ENCODE measurements at regions of chr16 and their contacts with region 1.

Region 1: GRCh38 chr16:20849587-20850390 is 43.5 kb downstream of the REXO5 start:
- DNase-seq: peak; percentile 35
- CTCF ChIP-seq: peak; percentile 99

Region 2: DNA sequence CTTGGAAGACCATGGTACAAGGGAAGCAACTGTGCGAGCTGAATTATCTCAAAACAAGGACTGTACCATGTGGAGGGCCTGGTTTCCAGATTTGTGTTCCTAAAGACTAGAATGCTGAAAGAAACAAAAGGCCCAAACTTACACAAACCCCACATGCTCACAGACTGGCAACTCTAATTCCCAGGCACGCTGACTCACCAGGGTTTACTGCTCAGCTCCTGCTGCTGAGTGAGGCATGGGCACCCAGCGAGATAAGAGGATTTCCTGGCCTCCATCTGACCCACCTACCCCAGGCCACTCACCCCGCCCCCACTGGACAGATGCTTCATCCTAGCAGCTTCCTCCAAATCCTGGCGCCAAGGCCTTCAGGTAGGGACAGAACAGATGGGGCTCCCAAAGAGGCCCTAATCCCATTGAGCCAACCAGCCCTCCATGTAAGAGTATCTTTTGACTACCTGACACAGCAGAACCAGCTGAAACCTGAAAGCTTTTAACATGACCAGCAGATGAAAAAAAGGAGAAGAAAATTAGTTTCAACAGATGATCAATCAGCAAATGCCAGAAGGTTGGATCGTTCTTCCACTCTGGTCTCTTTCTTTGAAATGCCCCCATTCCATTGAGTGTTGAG is 16.5 kb after region 1 on chr16:
- CTCF ChIA-PET with region 1: interaction called, 34 read pairs
- POLR2A ChIA-PET with region 1: no interaction called
- DNase-seq: no peak
- CTCF ChIP-seq: no peak

Region 3: DNA sequence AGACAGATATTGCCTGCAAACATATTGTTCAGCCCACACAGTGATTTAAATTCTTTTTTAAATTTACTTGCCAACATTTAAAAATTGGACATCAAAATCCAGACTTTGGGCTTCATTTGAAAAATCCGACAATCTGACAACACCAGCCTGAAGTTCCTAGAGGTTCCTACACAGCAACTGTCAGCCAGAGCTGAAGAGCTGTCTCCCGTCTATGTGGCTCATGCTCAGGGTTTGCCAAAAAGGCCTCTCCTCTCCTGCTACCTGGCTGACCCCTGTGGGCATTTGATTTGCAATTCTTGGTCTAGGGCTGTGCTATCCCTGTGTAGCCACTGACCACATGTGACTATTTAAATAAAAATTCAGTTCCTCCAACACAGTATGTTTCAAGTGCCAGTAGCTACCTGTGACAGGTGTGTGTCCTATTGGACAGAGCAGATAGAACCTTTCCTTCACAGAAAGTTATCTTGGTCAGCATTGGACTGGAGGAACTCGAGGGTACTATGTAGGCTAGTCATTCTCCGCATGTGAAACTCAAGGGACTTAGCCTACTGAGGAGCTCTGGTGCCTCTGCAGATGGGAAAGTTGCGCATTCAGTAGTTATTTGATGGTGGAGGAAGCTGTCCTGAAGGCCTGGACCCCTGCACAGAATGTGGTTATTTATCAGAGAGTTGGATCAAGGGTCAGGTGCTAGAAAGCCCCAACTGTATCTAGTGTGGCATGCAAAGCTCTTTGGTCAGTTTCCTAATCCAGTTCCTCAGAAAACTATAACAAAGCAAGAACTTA is 53.5 kb after region 1 on chr16:
- CTCF ChIA-PET with region 1: interaction called, 14 read pairs
- POLR2A ChIA-PET with region 1: no interaction called
- DNase-seq: no peak
- CTCF ChIP-seq: no peak

Region 4: DNA sequence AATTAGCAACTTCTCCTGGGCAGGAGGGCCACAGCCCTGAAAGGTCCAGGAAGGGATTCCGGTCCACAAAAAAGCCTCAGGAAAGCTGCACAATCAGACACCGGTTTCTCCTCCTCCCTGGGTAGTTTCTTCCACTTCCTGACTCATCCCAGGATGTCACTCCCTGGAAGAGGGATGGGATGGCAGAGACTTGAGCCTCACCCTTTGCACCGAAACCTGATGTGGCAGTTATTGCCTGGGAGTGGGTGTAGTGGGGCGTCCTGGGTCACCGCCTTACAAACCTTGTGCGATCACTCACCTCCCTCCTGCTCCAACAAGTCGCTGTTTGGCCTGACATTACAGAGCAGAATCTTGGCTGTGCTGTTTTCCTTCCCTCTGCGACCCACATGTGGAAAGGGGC is 121.6 kb after region 1 on chr16:
- CTCF ChIA-PET with region 1: no interaction called
- POLR2A ChIA-PET with region 1: no interaction called
- DNase-seq: no peak
- CTCF ChIP-seq: no peak

Region 5: DNA sequence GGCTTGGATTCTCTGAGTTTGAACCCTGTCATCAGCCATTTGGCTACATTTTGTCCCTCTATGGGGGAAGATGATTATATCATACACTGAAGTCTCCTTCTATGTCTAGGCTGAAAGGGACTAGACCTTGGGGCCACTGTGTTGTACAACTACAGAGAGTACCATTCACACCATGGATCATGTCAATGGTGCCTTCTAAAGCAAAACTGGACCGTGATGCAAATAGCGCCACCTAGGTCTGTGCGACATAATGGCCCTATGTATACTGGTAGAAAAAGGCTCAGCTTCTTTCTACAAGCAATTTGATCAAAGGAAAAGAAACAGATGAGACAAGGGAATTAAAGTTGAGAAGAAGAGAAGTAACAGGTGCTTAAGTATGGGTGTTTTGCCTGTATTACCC is 151.5 kb after region 1 on chr16:
- CTCF ChIA-PET with region 1: interaction called, 18 read pairs
- POLR2A ChIA-PET with region 1: no interaction called
- DNase-seq: peak; percentile 24
- CTCF ChIP-seq: peak; percentile 20

Region 6: DNA sequence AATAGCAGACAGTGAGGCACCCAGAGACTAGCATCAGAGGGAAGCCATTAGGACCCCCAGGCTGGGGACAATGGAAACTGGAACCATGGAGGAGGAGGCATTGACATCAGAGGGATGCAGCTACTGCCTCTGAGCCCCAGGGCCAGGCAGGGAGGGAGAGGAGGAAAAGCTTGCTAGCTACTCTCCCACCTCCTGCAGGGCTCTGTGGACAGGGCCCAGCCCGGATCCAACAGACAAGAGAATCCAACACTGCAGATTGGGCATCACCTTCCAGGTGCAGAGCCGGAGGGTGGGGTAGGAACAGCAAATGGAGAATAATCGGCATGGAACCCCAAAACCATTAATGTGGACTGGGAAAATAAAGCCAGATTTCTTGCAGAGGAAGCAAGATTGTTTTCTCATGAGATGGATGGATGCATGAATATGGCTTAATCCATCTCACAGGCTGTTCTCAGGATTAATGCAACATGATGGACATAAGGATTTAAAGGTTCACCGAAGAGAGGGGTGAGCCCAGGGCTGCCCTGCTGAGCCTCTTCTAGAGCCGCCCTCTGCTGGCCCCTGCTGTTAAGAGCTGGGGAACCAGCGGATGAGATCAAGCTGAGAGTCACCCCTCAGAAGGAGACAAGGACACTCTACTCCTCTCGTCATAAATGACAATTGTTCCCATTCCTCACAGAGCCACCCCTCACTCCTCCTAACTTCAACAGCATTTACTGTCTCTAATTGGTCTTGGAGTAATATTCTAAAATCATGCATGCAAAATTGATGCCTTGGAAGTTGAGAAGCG is 252.0 kb after region 1 on chr16:
- CTCF ChIA-PET with region 1: interaction called, 11 read pairs
- POLR2A ChIA-PET with region 1: no interaction called
- DNase-seq: no peak
- CTCF ChIP-seq: peak; percentile 40

Measured in GM10248 (cell line).